Heart left ventricle (tissue), 16 donors: ENCODE measurements at regions of chr20 and their contacts with region 1.

Region 1: GRCh38 chr20:21125849-21126580 is at the start of gene KIZ:
- DNase-seq: peak; percentile 97 to 99 (median 97)
- ATAC-seq: peak; percentile 97 to 100 (median 100)
- H3K4me3 ChIP-seq: peak within 1 kb of the TSS; percentile 80 to 99 (median 93)
- H3K27ac ChIP-seq: peak within 1 kb of the TSS; percentile 71 to 92 (median 85)
- H3K4me1 ChIP-seq: peaks cover 0 to 21% (median 11%) of the 10 kb centered on the region in 12 donors
- H3K27me3 ChIP-seq: peaks cover 0 to 2% (median 0%) of the 10 kb centered on the region in 9 donors
- CTCF ChIP-seq: peak; percentile 19 to 60 (median 34)
- POLR2A ChIP-seq: peak in 1 of 2 donors; percentile 92
- total RNA-seq, gene KIZ: 15.2 to 31.2 (median 25.2) TPM

Region 2: GRCh38 chr20:21202284-21202683 is 76.3 kb after region 1 on chr20:
- intact Hi-C with region 1: no loop called
- DNase-seq: no peak
- ATAC-seq: no peak
- H3K4me3 ChIP-seq: no peak overlapping the region
- H3K27ac ChIP-seq: no peak overlapping the region
- H3K4me1 ChIP-seq: no peaks in the 10 kb centered on the region
- H3K27me3 ChIP-seq: no peaks in the 10 kb centered on the region
- CTCF ChIP-seq: no peak
- POLR2A ChIP-seq: no peak

Region 3: GRCh38 chr20:21251278-21251677 is 125.3 kb after region 1 on chr20:
- intact Hi-C with region 1: no loop called
- DNase-seq: no peak
- ATAC-seq: no peak
- H3K4me3 ChIP-seq: no peak overlapping the region
- H3K27ac ChIP-seq: no peak overlapping the region
- H3K4me1 ChIP-seq: no peaks in the 10 kb centered on the region
- H3K27me3 ChIP-seq: no peaks in the 10 kb centered on the region
- CTCF ChIP-seq: no peak
- POLR2A ChIP-seq: no peak

Region 4: DNA sequence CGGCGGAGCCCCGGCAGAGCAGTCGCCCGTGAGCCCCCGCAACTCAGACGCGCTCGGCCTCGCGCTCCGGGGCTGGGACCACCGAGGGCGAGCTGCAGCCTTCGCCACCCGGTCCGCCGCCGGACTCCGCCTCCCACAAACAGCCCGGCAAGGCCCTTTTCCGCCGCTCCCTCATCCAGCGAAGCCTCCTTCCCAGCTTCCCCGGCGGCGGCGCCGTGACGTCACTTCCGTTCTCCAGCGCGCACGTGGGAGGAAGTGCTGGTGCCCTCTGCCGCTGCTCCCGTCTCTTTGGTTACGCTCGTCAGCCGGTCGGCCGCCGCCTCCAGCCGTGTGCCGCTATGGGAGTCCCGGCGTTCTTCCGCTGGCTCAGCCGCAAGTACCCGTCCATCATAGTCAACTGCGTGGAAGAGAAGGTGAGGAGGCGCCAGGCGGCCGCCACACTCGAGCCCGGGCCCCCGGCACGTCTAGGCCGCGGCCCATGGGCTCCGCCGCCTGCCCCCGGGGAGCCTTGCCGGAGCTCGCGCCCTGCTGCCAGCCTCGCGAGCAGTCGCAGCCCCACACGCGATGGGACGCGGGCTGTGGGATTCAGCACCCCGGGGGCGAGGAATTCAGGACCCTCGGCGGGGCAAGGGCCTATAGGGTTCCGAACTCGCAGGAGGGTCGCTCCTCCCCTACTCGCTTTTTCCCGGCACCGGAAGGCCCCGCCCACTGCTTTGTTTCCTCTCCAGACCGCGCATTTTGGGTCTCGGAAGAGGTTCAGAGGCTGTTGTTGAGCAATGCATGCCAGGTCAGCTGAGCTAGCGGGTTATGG is 177.3 kb after region 1 on chr20 and contains the start of gene XRN2:
- intact Hi-C with region 1: loop called in 2 of 10 experiments (anchors 5 to 10 kb)
- DNase-seq: peak; percentile 96 to 98 (median 97)
- ATAC-seq: peak; percentile 91 to 99 (median 98)
- H3K4me3 ChIP-seq: peak within 1 kb of the TSS; percentile 75 to 100 (median 92)
- H3K27ac ChIP-seq: peak within 1 kb of the TSS; percentile 90 to 100 (median 96)
- H3K4me1 ChIP-seq: peaks cover 0 to 25% (median 16%) of the 10 kb centered on the region in 12 donors
- H3K27me3 ChIP-seq: no peaks in the 10 kb centered on the region
- CTCF ChIP-seq: peak in 3 of 12 donors; percentile 9 to 41 (median 34)
- POLR2A ChIP-seq: peak in 1 of 2 donors; percentile 74
- total RNA-seq, gene XRN2: 30.9 to 48.3 (median 33.2) TPM

Region 5: DNA sequence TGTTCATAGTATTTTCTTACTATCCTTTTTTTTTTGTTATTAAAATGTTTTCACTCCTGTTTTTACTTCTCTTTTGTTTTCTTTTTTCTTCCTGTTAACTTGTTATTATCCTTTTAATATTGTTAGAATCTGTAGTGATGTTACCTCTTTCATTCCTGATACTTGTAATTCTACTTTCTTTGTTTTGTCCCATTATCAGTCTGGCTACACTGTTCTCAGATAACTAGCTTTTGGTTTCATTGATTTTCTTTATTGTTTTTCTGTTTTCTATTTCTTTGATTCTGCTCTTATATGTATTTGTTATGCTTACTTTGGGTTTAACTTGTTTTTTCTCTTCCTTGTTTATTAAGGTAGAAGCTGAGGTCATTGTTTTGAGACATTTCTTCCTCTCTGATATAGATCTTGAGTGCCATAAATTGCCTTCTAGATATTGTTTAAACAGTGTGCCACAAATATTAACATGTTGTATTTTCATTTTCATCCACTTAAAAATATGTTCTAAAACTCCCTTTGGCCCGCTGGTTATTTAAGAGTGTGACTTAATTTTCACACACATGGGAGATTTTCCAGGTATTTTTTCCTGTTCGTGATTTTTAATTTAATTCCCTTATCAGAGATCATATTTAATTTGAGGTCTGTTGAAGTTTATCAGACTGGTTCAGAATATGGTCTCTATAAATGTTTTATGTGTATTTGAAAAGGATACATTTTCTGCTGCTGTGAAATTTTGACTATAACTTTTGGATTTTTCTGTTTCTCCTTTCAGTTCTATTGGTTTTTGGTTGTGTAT is 183.9 kb after region 1 on chr20:
- intact Hi-C with region 1: loop called in 2 of 10 experiments (anchors 5 to 10 kb)
- DNase-seq: no peak
- ATAC-seq: no peak
- H3K4me3 ChIP-seq: no peak overlapping the region
- H3K27ac ChIP-seq: no peak overlapping the region
- H3K4me1 ChIP-seq: peaks cover 0 to 72% (median 27%) of the 10 kb centered on the region in 12 donors
- H3K27me3 ChIP-seq: no peaks in the 10 kb centered on the region
- CTCF ChIP-seq: no peak
- POLR2A ChIP-seq: no peak

Region 6: DNA sequence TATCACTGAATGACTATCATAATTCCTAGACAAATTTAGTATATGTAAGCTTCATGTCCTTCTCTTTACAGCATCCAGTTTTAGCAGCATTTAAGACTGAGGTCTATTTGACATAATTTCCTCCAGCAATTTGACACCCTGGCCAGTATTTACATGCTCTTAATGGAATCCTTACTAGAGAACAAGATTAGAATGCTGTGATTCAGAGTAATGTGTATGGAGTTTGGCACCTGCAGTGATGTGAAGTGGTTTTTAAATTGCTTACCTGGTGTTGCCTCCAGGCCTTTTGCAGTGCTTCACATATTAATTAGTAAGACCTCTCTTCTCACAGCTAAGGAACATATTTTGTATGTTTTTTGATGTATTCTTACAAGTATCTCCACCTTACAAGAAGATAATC is 261.5 kb after region 1 on chr20:
- intact Hi-C with region 1: loop called in 1 of 10 experiments (anchors 10 kb)
- DNase-seq: no peak
- ATAC-seq: no peak
- H3K4me3 ChIP-seq: no peak overlapping the region
- H3K27ac ChIP-seq: no peak overlapping the region
- H3K4me1 ChIP-seq: peaks cover 0 to 7% (median 0%) of the 10 kb centered on the region in 12 donors
- H3K27me3 ChIP-seq: peaks cover 3 to 20% (median 15%) of the 10 kb centered on the region in 9 donors
- CTCF ChIP-seq: no peak
- POLR2A ChIP-seq: no peak